Activated CD4-positive, alpha-beta memory T cell treated with anti-CD3 and anti-CD28 coated beads, Interleukin-2, amount 10 ng/mL, durations not matched to agents 7 days and 5 days (primary cell): ENCODE measurements at regions of chr12 and their contacts with region 1.

Region 1: DNA sequence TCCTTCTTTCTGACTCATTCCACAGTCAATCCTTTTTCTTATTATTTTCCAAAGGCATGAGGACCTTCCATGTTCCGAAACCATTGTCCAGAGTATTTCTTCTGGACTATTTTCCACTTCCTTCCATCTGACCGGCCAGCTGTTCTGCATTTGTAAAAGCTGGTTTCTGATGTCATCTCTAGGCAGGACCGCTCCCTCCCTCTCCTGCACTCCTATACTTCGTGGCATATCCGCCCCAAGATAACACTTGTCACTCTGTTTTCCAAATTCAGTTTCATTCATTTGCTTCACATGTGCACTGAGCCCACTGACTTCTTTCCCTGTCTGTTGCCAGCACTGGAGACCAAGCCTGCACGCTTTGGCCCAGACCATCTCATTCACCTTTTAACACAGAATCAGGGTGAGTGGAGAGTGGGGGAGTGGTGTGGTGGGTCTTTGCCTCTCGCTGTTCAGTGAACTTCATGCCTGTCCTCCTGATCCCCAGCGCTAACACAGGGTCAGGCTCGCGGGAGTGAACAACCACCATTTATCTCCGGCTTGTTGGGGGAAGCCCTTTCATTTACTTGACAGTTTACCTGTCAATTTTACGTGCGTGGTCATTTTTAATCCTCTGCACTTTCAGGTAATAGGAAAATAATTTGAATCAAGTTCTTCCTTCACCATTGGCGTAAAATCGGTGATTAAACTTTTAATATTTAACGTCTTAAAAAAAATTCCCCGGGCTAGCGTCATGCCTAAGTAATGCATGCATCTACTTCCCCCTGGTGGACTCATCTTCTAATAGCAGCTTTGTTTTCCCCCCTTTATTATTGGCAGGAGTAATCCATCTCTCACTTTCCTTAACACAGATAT is 52.5 kb downstream of the C12orf75 start:
- DNase-seq: no peak
- H3K4me3 Mint-ChIP-seq: no peak overlapping the region
- H3K27ac Mint-ChIP-seq: no peak overlapping the region
- H3K4me1 Mint-ChIP-seq: no peaks in the 10 kb centered on the region
- H3K27me3 Mint-ChIP-seq: no peaks in the 10 kb centered on the region

Region 2: GRCh38 chr12:105279460-105280056 is 103.4 kb before region 1 on chr12:
- CTCF ChIA-PET with region 1: interaction called, 10 read pairs
- POLR2A ChIA-PET with region 1: no interaction called
- DNase-seq: peak; percentile 66
- H3K4me3 Mint-ChIP-seq: no peak overlapping the region
- H3K27ac Mint-ChIP-seq: no peak overlapping the region
- H3K4me1 Mint-ChIP-seq: peaks cover 4% of the 10 kb centered on the region
- H3K27me3 Mint-ChIP-seq: peaks cover 11% of the 10 kb centered on the region

Region 3: GRCh38 chr12:105433804-105434203 is 50.8 kb after region 1 on chr12:
- CTCF ChIA-PET with region 1: no interaction called
- POLR2A ChIA-PET with region 1: no interaction called
- DNase-seq: no peak
- H3K4me3 Mint-ChIP-seq: no peak overlapping the region
- H3K27ac Mint-ChIP-seq: no peak overlapping the region
- H3K4me1 Mint-ChIP-seq: no peaks in the 10 kb centered on the region
- H3K27me3 Mint-ChIP-seq: peaks cover 18% of the 10 kb centered on the region